ENCODE measurements at regions of chr2 and their contacts with region 1.

Region 1: GRCh38 chr2:234483568-234484251 is 13.2 kb downstream of the ARL4C start:
- DNase-seq: peak; percentile 47
- ATAC-seq: peak; percentile 86
- H3K4me3 Mint-ChIP-seq: peak overlapping the region; percentile 73
- H3K27ac Mint-ChIP-seq: peak overlapping the region; percentile 71
- H3K4me1 Mint-ChIP-seq: peaks cover 44% of the 10 kb centered on the region
- H3K27me3 Mint-ChIP-seq: no peaks in the 10 kb centered on the region
- CTCF ChIP-seq: no peak

Region 2: DNA sequence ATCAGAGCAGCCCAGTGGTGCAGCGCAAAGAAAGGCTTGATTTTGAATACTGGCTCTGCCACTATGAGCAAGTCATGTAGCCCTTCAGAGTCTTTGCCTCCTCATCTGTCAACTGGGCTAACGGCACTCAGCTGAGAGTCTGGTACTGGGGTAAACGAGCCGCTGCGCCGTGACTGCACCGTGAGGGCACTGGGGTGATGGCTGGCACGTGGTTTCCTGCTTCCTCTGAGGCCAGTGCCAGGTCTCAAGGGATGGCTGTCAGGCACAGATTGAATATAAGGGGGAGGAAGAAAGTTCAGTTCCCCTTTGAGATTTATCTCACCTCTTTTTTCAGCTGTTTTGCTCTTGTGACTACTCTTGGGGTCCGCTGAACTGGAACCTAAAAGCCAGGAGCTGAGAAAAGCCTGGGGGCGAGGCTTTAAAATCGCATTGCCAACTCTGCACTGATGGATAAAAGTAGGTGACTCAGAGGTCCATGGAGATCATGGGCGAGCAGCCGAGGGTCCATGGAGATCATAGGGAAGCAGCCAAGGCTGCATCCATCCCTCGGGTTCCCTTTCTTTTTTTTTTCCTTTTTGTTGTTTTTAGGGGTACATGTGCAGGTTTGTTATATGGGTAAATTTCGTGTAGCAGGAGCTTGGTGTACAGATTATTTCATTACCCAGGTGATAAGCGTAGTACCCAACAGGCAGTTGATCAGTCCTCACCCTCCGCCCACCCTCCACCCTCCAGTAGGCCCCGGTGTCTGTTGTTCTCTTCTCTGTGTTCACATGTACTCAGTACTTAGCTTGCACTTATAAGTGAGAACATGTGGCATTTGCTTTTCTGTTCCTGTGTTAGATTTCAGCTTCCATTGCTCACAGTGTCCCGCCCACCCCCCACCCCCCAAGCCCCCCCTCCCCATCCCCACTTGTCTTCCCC is 319.0 kb before region 1 on chr2:
- CTCF ChIA-PET with region 1: interaction called, 3 read pairs
- POLR2A ChIA-PET with region 1: interaction called, 11 read pairs
- intact Hi-C with region 1: loop called (anchors 5 kb)
- DNase-seq: peak; percentile 62
- ATAC-seq: peak; percentile 97
- H3K4me3 Mint-ChIP-seq: peak overlapping the region; percentile 48
- H3K27ac Mint-ChIP-seq: peak overlapping the region; percentile 74
- H3K4me1 Mint-ChIP-seq: peaks cover 54% of the 10 kb centered on the region
- H3K27me3 Mint-ChIP-seq: peaks cover 3% of the 10 kb centered on the region
- CTCF ChIP-seq: no peak

Region 3: GRCh38 chr2:234308813-234309195 is 174.9 kb before region 1 on chr2:
- CTCF ChIA-PET with region 1: interaction called, 6 read pairs
- POLR2A ChIA-PET with region 1: interaction called, 15 read pairs
- intact Hi-C with region 1: loop called (anchors 1 kb)
- DNase-seq: peak; percentile 43
- ATAC-seq: peak; percentile 93
- H3K4me3 Mint-ChIP-seq: peak overlapping the region; percentile 50
- H3K27ac Mint-ChIP-seq: peak overlapping the region; percentile 74
- H3K4me1 Mint-ChIP-seq: peaks cover 35% of the 10 kb centered on the region
- H3K27me3 Mint-ChIP-seq: peaks cover 33% of the 10 kb centered on the region
- CTCF ChIP-seq: no peak

Region 4: GRCh38 chr2:234411793-234412192 is 71.9 kb before region 1 on chr2:
- CTCF ChIA-PET with region 1: interaction called, 6 read pairs
- POLR2A ChIA-PET with region 1: interaction called, 4 read pairs
- intact Hi-C with region 1: loop called (anchors 2 kb)
- DNase-seq: no peak
- ATAC-seq: peak; percentile 85
- H3K4me3 Mint-ChIP-seq: peak overlapping the region; percentile 44
- H3K27ac Mint-ChIP-seq: no peak overlapping the region
- H3K4me1 Mint-ChIP-seq: peaks cover 58% of the 10 kb centered on the region
- H3K27me3 Mint-ChIP-seq: no peaks in the 10 kb centered on the region
- CTCF ChIP-seq: no peak

Region 5: DNA sequence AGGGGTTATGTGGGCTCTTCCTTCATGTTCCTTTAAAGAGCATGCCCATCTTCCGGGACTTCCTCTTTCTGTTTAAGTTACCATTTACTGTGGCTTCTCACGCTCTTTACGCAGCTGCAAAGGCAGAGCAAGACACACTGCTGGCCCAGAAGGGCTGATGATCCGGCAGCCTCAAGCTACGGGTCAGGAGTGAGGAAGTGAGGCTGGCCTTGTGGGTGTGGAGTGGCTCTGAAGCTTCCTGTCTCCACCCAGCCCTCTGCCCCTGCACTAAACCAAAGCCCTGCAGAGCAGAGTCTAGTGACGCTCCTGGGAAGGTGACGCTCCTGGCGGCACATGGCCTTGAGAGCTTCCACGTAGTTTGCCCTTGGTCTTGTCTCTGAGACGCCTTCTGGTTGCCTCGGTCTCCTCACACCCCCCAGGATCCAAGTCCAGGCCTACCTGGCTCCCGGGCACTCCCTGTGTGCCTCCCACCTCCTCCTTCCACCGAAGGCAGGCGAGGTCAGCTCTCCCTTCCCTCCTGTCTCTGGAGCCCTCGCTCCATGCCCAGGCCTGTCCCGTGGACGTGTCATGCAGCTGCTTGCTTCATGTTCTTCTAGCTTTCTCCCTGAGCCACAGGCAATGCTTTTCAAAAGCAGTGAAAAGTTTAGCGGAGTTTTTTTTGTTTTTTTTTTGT is 37.2 kb before region 1 on chr2:
- CTCF ChIA-PET with region 1: interaction called, 3 read pairs
- POLR2A ChIA-PET with region 1: interaction called, 26 read pairs
- intact Hi-C with region 1: loop called (anchors 1 kb)
- DNase-seq: peak; percentile 68
- ATAC-seq: peak; percentile 93
- H3K4me3 Mint-ChIP-seq: peak overlapping the region; percentile 66
- H3K27ac Mint-ChIP-seq: peak overlapping the region; percentile 96
- H3K4me1 Mint-ChIP-seq: peaks cover 83% of the 10 kb centered on the region
- H3K27me3 Mint-ChIP-seq: no peaks in the 10 kb centered on the region
- CTCF ChIP-seq: no peak

Region 6: GRCh38 chr2:234494361-234495250 is 10.9 kb after region 1 on chr2:
- CTCF ChIA-PET with region 1: interaction called, 13 read pairs
- POLR2A ChIA-PET with region 1: interaction called, 31 read pairs
- intact Hi-C with region 1: loop called (anchors 1 kb)
- DNase-seq: no peak
- ATAC-seq: no peak
- H3K4me3 Mint-ChIP-seq: peak overlapping the region; percentile 88
- H3K27ac Mint-ChIP-seq: peak overlapping the region; percentile 70
- H3K4me1 Mint-ChIP-seq: peaks cover 73% of the 10 kb centered on the region
- H3K27me3 Mint-ChIP-seq: no peaks in the 10 kb centered on the region
- CTCF ChIP-seq: no peak

Region 7: GRCh38 chr2:234512884-234513669 is 29.4 kb after region 1 on chr2:
- CTCF ChIA-PET with region 1: no interaction called
- POLR2A ChIA-PET with region 1: no interaction called
- intact Hi-C with region 1: no loop called
- DNase-seq: no peak
- ATAC-seq: no peak
- H3K4me3 Mint-ChIP-seq: no peak overlapping the region
- H3K27ac Mint-ChIP-seq: no peak overlapping the region
- H3K4me1 Mint-ChIP-seq: no peaks in the 10 kb centered on the region
- H3K27me3 Mint-ChIP-seq: peaks cover 8% of the 10 kb centered on the region
- CTCF ChIP-seq: no peak